GM18951 (cell line): ENCODE measurements at regions of chr3 and their contacts with region 1.

Region 1: GRCh38 chr3:124569761-124570160 is 160.5 kb upstream of the UMPS start:
- POLR2A ChIP-seq: no peak

Region 2: GRCh38 chr3:124691599-124691998 is 121.8 kb after region 1 on chr3:
- in situ Hi-C with region 1: loop called (anchors 5 kb)
- POLR2A ChIP-seq: no peak